ENCODE measurements at regions of chr4 and their contacts with region 1.

Region 1: GRCh38 chr4:158624889-158625478 is 46.7 kb downstream of the C4orf46 start:
- DNase-seq: no peak
- H3K4me3 ChIP-seq: no peak overlapping the region
- H3K27ac ChIP-seq: no peak overlapping the region
- H3K4me1 ChIP-seq: no peaks in the 10 kb centered on the region
- H3K27me3 ChIP-seq: no peaks in the 10 kb centered on the region
- CTCF ChIP-seq: peak; percentile 39 to 68 (median 60)
- POLR2A ChIP-seq: no peak

Region 2: DNA sequence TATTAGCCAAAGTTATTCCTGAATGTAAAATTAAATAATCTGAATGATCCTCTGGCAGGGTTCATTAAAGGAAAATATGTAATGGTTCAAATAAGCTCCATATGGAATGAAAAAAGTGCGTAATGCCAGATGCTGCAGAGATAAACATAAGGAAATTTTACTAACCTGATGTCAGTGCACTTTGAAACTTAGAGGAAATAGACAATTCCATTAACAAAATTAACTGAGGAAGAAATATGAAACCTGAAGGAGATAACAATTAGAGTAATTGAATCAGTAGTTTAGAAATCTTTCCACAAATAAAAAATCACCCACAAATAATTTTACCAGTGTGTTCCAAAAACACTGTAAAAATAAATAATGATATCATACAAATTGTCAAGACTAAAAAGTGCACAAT is 1017.0 kb before region 1 on chr4:
- intact Hi-C with region 1: no loop called
- DNase-seq: no peak
- H3K4me3 ChIP-seq: no peak overlapping the region
- H3K27ac ChIP-seq: no peak overlapping the region
- H3K4me1 ChIP-seq: no peaks in the 10 kb centered on the region
- H3K27me3 ChIP-seq: no peaks in the 10 kb centered on the region
- CTCF ChIP-seq: no peak
- POLR2A ChIP-seq: no peak

Region 3: DNA sequence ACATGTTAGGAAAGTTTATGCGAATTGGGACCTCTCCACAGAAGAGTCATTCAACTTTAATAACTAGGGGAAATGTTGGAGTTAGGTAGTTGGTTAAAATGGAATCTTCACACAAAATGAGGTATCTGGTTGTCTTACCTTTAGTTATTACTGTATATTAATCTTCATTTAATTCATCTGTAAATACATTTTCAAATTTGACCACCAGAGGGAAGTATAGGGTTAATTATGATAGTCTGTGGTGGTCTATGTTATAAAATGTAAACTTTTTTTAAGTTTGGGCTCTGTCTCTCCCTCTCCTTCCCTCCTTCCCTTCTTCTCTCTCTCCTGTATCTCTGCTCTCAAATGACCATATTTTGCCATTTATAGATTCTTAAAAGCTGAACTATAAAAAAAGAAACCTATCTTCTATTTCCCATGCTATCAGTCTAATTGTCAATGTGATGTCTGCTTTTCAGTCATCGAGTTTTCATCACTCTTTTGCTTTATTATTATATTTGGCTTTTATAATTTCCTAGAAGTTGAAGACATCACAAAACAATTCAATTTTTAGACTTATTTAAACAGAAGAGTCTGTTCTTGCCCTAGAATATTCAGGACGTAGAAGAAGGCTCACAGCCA is 364.9 kb before region 1 on chr4:
- intact Hi-C with region 1: loop called (anchors 5 kb)
- DNase-seq: no peak
- H3K4me3 ChIP-seq: no peak overlapping the region
- H3K27ac ChIP-seq: no peak overlapping the region
- H3K4me1 ChIP-seq: no peaks in the 10 kb centered on the region
- H3K27me3 ChIP-seq: no peaks in the 10 kb centered on the region
- CTCF ChIP-seq: peak in 3 of 4 experiments; percentile 34 to 48 (median 43)
- POLR2A ChIP-seq: no peak

Region 4: GRCh38 chr4:158459085-158459820 is 165.7 kb before region 1 on chr4:
- intact Hi-C with region 1: no loop called
- DNase-seq: no peak
- H3K4me3 ChIP-seq: no peak overlapping the region
- H3K27ac ChIP-seq: no peak overlapping the region
- H3K4me1 ChIP-seq: no peaks in the 10 kb centered on the region
- H3K27me3 ChIP-seq: no peaks in the 10 kb centered on the region
- CTCF ChIP-seq: no peak
- POLR2A ChIP-seq: no peak

Region 5: GRCh38 chr4:158809611-158810486 is 184.9 kb after region 1 on chr4:
- intact Hi-C with region 1: no loop called
- DNase-seq: peak; percentile 58
- H3K4me3 ChIP-seq: no peak overlapping the region
- H3K27ac ChIP-seq: peak overlapping the region; percentile 50 to 62
- H3K4me1 ChIP-seq: peaks cover 10% of the 10 kb centered on the region
- H3K27me3 ChIP-seq: no peaks in the 10 kb centered on the region
- CTCF ChIP-seq: no peak
- POLR2A ChIP-seq: peak; percentile 13

Region 6: DNA sequence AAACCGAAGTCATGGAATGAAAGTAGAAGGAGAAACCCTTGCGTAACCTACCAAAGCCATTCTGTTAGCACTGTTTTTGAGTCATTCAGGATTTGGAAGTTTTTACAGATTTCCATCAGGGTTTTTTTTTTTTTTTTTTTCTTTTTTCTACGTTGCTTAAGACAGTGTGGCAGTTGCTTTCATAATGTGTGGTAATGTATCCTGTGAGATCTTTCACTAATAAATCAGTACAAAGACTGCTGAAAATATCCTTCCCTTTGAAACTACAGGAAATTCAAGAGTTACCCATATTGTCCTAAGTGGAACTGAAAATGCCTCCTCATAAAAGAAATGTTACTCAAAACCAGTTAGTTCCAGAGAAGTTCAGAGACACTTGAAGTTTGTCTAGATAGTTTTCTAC is 615.7 kb after region 1 on chr4:
- intact Hi-C with region 1: no loop called
- DNase-seq: no peak
- H3K4me3 ChIP-seq: no peak overlapping the region
- H3K27ac ChIP-seq: no peak overlapping the region
- H3K4me1 ChIP-seq: no peaks in the 10 kb centered on the region
- H3K27me3 ChIP-seq: no peaks in the 10 kb centered on the region
- CTCF ChIP-seq: no peak
- POLR2A ChIP-seq: no peak

Measured in prostate gland (tissue), 2 donors.